ENCODE measurements at regions of chr9 and their contacts with region 1.

Region 1: GRCh38 chr9:133406480-133407307 is 11.1 kb downstream of the REXO4 start:
- DNase-seq: peak; percentile 23 to 65
- ATAC-seq: peak; percentile 31 to 76
- H3K4me3 ChIP-seq: no peak overlapping the region
- H3K27ac ChIP-seq: peak overlapping the region; percentile 51 to 79 (median 70)
- H3K4me1 ChIP-seq: peaks cover 16 to 17% of the 10 kb centered on the region in 2 donors
- H3K27me3 ChIP-seq: no peaks in the 10 kb centered on the region
- CTCF ChIP-seq: peak; percentile 77 to 90 (median 83)
- POLR2A ChIP-seq: no peak

Region 2: DNA sequence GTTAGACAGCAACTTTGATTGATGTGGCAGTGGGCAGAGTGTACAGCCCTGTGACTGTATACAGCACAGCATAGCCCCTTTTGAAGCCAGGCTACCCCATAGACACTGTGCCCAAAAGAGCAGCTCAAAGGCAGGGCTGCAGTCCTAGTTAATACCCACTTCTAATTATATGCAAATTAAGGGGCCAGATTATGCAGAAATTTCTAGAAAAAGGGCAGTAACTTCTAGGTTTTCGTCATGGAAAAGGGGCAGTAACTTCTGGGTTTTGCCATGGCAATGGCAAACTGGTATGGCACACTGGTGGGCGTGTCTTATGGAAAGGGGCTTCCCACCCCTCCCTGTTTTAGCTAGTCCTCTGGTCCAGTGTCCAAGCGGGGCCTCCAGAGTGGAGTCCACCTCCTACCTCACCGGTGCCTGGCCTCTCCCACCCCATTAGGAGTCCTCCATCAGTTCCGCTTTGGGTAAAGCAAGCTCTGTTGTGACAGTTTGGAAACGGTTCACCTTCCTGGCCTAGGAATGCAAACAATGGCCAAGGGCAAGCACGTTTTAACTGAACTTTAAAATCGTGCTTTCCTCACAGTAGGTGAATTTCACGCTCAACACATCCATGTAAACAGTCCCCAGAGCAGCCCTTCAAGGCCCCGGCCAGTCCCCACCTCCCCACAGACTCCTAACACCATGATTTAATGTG is 21.1 kb after region 1 on chr9:
- in situ Hi-C with region 1: no loop called
- intact Hi-C with region 1: loop called (anchors 1 kb)
- DNase-seq: no peak
- ATAC-seq: no peak
- H3K4me3 ChIP-seq: no peak overlapping the region
- H3K27ac ChIP-seq: no peak overlapping the region
- H3K4me1 ChIP-seq: peaks cover 5 to 15% of the 10 kb centered on the region in 2 donors
- H3K27me3 ChIP-seq: peaks cover 9 to 16% (median 10%) of the 10 kb centered on the region in 3 donors
- CTCF ChIP-seq: no peak
- POLR2A ChIP-seq: no peak

Region 3: GRCh38 chr9:133485361-133486260 is 78.9 kb after region 1 on chr9:
- in situ Hi-C with region 1: loop called (anchors 5 to 10 kb)
- intact Hi-C with region 1: loop called (anchors 1 kb)
- DNase-seq: no peak
- ATAC-seq: no peak
- H3K4me3 ChIP-seq: no peak overlapping the region
- H3K27ac ChIP-seq: no peak overlapping the region
- H3K4me1 ChIP-seq: no peaks in the 10 kb centered on the region
- H3K27me3 ChIP-seq: no peaks in the 10 kb centered on the region
- CTCF ChIP-seq: no peak
- POLR2A ChIP-seq: no peak